HEK293 (cell line): ENCODE measurements at regions of chr17 and their contacts with region 1.

Region 1: DNA sequence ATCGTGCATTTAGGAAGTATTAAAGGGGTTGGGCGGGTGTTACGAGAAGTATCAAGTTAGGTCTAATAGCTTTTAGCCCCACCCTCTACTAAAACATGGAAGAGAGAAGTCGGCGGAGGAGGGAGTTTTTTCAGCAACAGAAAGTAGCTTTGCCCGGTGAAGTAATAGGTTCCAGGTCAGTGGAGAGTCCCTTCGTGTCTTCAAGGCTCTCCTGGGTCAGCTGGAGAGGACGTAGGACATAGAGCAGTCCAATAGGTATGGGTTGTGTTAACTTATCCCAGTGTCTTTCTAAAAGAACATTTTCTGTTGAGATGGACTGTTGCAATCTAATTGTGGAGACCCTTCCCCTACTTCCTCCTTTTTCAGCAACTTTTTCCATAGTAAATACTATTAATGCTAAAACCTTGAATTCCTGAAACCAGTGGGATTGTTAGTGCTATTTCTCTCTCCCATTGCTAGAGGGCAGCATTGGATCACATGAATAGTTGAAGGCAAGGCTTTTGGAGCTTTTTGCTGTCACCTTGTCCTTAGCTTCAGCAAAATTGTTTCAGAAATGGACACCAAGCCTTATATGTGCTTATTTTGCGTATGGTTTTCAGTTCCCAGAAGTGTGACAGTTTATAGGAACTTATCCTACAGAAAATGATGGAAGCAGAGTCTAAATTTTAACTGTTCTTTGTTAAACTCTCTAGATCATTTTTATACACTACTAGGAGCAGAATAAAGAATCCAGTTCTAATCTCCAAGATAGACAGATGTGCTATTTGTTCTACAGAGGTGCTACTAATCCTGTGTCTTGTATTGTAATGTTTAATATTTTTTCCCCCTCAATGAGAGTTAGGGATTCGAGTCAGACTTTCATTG is 38.4 kb downstream of the UTP18 start:
- H3K4me3 ChIP-seq: no peak overlapping the region
- H3K27ac ChIP-seq: no peak overlapping the region
- H3K4me1 ChIP-seq: no peaks in the 10 kb centered on the region
- CTCF ChIP-seq: peak; percentile 53; the same call in 1 of the 2 replicates

Region 2: GRCh38 chr17:51322390-51323029 is 23.8 kb after region 1 on chr17:
- CTCF ChIA-PET with region 1: interaction called, 10 read pairs
- POLR2A ChIA-PET with region 1: no interaction called
- H3K4me3 ChIP-seq: no peak overlapping the region
- H3K27ac ChIP-seq: no peak overlapping the region
- H3K4me1 ChIP-seq: no peaks in the 10 kb centered on the region
- CTCF ChIP-seq: peak; percentile 77

Region 3: GRCh38 chr17:51537996-51538550 is 239.3 kb after region 1 on chr17:
- CTCF ChIA-PET with region 1: interaction called, 20 read pairs
- POLR2A ChIA-PET with region 1: no interaction called
- H3K4me3 ChIP-seq: no peak overlapping the region
- H3K27ac ChIP-seq: no peak overlapping the region
- H3K4me1 ChIP-seq: no peaks in the 10 kb centered on the region
- CTCF ChIP-seq: no peak